HepG2 (cell line): ENCODE measurements at regions of chr16 and their contacts with region 1.

Region 1: GRCh38 chr16:66608241-66609138 is 4.0 kb downstream of the CMTM3 start:
- DNase-seq: peak; percentile 93
- ATAC-seq: peak; percentile 73
- H3K4me3 ChIP-seq: no peak overlapping the region
- H3K27ac ChIP-seq: peak overlapping the region; percentile 61
- H3K4me1 ChIP-seq: peaks cover 40% of the 10 kb centered on the region
- H3K27me3 ChIP-seq: no peaks in the 10 kb centered on the region
- CTCF ChIP-seq: peak; percentile 98
- EP300 ChIP-seq: peak in 1 of 2 experiments; percentile 20; a peak in 2 of 4 replicates
- POLR2A ChIP-seq: peak in 1 of 2 experiments; percentile 35; a peak in 1 of 4 replicates
- RAD21 ChIP-seq: peak; percentile 96

Region 2: DNA sequence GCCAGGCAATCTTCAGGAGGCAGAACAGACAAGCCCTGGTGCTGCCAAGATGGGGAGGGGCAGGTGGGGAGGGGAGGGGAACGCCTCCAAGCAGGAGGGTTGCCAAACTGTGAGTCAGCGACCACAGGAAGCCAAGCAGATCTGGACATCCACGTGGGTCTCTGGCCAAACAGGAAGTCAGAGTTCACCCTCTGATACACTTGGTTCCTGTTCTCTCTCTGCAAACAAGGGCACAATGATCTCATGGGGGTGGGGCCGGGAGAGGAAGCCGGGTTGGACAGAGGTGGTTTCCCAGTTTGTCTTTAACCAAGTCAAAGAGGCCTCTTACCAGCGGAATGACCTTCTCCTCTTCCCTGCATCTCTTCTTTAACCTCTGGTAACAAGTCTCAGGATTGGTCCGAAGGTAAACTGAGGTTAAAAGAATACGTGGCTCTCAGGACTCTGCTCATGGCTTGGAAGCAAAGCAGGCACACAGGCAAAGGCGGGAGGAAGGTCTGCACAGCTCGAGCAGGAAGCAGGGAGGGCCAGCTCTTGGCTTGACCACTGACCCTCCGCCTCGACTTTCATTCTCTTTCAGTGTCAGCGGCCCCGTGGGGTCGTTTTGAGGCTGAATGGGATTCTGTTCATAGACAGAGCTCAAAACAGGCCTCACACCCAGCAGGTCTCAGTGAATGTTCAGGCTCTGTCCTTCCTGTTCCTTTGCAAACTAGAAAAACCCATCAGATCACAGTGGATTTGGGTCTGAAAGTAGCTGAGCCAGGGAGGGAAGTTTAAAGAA is 91.5 kb before region 1 on chr16:
- CTCF ChIA-PET with region 1: no interaction called
- POLR2A ChIA-PET with region 1: interaction called, 9 read pairs
- in situ Hi-C with region 1: no loop called
- intact Hi-C with region 1: loop called (anchors 2 kb)
- DNase-seq: peak; percentile 100
- ATAC-seq: peak; percentile 93
- H3K4me3 ChIP-seq: peak overlapping the region; percentile 35 to 67 (median 43)
- H3K27ac ChIP-seq: peak overlapping the region; percentile 99
- H3K4me1 ChIP-seq: peaks cover 61% of the 10 kb centered on the region
- H3K27me3 ChIP-seq: no peaks in the 10 kb centered on the region
- CTCF ChIP-seq: 0 out of 2 replicates have a peak, but pooled peaks have one; percentile 4
- EP300 ChIP-seq: peak; percentile 65 to 94; a peak in 3 of 4 replicates
- POLR2A ChIP-seq: peak; percentile 81 to 94
- RAD21 ChIP-seq: no peak; the same call in none of the 2 replicates

Region 3: DNA sequence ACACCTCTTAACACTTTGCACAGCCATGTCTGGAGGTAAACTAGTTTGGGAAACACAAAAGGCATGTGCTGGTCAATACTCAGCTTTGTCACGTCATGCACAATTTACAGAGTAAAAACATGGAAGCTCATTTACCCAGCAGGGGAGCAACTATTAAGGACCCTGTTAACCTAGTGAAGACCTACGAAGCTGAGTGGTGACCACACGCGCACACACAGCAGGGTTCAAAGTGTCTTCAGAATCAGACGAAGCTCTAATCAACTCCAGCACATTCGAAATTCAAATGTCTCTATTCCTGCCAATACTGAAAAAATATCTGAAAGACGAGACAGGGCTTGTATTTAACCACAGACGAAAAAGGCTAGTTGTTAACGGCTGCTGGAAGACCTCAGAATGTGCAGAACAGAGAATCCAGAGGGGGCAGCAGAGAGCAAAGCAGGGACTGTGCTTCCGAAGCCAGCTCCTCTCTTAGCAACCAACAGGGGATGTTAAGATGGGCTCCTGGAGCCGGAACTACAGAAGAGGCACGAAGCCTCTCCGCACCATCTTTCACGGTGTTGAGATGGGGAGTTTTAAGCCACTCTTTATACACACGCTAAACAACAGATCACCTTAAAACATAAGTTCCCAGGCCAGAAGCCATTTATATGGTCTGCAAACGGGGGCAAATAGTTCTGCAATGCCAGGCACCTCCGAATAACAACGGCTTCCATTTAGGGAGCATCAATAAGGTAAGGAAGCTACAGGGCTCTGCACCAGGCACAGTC is 42.4 kb after region 1 on chr16:
- CTCF ChIA-PET with region 1: interaction called, 12 read pairs
- POLR2A ChIA-PET with region 1: interaction called, 4 read pairs
- in situ Hi-C with region 1: no loop called
- intact Hi-C with region 1: loop called (anchors 1 kb)
- DNase-seq: peak; percentile 79
- ATAC-seq: peak; percentile 98
- H3K4me3 ChIP-seq: no peak overlapping the region
- H3K27ac ChIP-seq: no peak overlapping the region
- H3K4me1 ChIP-seq: peaks cover 11% of the 10 kb centered on the region
- H3K27me3 ChIP-seq: no peaks in the 10 kb centered on the region
- CTCF ChIP-seq: peak; percentile 90
- EP300 ChIP-seq: no peak
- POLR2A ChIP-seq: no peak
- RAD21 ChIP-seq: peak; percentile 58

Region 4: GRCh38 chr16:66692330-66692729 is 83.8 kb after region 1 on chr16:
- CTCF ChIA-PET with region 1: interaction called, 8 read pairs
- POLR2A ChIA-PET with region 1: interaction called, 3 read pairs
- in situ Hi-C with region 1: loop called (anchors 5 kb)
- intact Hi-C with region 1: no loop called
- DNase-seq: no peak
- ATAC-seq: no peak
- H3K4me3 ChIP-seq: no peak overlapping the region
- H3K27ac ChIP-seq: no peak overlapping the region
- H3K4me1 ChIP-seq: peaks cover 75% of the 10 kb centered on the region
- H3K27me3 ChIP-seq: peaks cover 0 to 2% of the 10 kb centered on the region in 2 experiments; a peak in 3 of 5 replicates
- CTCF ChIP-seq: no peak
- EP300 ChIP-seq: no peak
- POLR2A ChIP-seq: no peak
- RAD21 ChIP-seq: no peak

Region 5: GRCh38 chr16:66872943-66873684 is 264.6 kb after region 1 on chr16:
- CTCF ChIA-PET with region 1: interaction called, 8 read pairs
- POLR2A ChIA-PET with region 1: no interaction called
- in situ Hi-C with region 1: loop called (anchors 5 kb)
- intact Hi-C with region 1: loop called (anchors 1 kb)
- DNase-seq: peak; percentile 77
- ATAC-seq: peak; percentile 92
- H3K4me3 ChIP-seq: peak overlapping the region; percentile 18 to 66 (median 41)
- H3K27ac ChIP-seq: no peak overlapping the region
- H3K4me1 ChIP-seq: peaks cover 35% of the 10 kb centered on the region
- H3K27me3 ChIP-seq: peaks cover 0 to 8% of the 10 kb centered on the region in 2 experiments; a peak in 2 of 5 replicates
- CTCF ChIP-seq: peak; percentile 99
- EP300 ChIP-seq: no peak
- POLR2A ChIP-seq: no peak
- RAD21 ChIP-seq: peak; percentile 74